HAP-1 (cell line): ENCODE measurements at regions of chr4 and their contacts with region 1.

Region 1: DNA sequence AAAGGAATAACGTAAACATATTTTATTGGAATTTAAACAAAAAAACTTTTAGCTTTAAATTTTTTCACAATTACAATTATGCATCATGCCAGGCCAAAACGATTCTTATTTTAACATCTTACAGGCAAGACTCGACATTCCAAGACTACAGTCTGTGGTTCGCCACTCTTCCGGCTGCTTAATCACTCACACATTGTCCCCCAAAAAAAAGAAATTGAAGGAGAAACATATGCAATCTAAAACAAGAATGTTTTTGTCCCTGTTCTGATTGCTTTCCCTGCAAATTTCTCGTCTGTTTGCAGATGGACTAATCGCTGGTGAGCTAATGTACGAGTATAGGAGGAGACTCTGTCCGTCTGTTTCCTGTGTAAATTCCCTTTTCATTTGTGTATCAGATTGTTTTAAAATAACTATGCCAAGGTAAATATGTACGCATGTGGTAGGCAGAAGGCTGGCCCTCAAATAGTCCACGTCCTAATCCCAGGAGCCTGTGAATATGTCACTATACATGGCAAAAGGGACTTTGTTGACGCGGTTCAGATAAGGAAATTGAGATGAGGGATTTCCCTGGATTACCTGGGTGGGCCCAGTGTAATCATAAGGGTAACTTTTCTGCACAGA is 37.7 kb upstream of the MTNR1A start:
- DNase-seq: no peak
- H3K4me3 ChIP-seq: no peak overlapping the region
- H3K4me1 ChIP-seq: no peaks in the 10 kb centered on the region
- H3K27me3 ChIP-seq: no peaks in the 10 kb centered on the region

Region 2: DNA sequence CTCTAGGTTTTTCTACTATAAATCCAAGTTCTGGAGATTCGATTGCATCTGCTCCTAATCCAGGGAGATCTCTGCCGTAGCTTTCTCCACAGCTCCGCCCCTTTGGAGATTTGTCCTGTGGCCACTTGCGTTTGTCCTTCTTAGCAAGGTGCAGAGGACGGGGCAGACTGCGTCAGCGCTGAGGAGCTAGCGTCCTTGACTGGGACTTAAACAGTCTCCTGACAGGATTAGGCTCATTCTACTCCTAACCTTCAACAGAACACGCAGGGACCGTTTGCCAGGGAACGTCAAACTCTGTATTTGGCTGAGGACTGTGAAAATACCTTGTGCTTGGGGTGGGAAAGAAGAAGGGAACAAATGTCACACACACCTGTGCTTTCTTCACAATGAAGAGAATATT is 819.7 kb before region 1 on chr4:
- in situ Hi-C with region 1: no loop called
- DNase-seq: peak in 1 of 2 experiments; percentile 28
- H3K4me3 ChIP-seq: no peak overlapping the region
- H3K4me1 ChIP-seq: peaks cover 12% of the 10 kb centered on the region
- H3K27me3 ChIP-seq: no peaks in the 10 kb centered on the region

Region 3: DNA sequence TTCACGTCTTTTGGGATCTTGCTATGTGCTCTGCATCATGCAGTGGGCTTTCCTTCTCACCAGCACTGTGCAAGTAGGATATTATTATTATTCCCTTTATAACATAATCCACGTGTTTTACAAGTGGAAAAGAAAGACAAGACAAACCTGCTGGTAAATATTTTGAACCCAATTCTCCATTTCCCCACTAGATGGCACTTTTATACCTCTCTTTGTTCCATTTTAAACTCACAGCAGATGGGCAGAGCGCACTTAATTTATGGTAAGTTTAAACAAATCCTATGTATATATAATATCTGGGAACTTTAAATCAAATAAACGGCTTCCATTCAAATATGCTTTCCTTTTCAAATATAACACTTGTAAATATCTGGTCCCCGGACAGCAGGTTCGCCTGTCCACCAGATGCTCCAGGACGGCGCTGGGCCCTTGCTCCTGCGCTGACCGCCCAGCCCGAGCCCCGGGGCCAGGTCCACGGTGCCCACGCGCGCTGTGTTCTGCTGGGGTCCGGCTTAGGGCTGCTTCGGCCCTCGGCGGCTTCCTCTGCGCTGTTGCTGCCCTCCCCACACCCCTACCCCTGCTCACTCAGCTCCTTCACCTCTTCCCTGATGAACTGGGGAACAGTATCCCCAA is 295.9 kb before region 1 on chr4:
- in situ Hi-C with region 1: loop called (anchors 10 kb)
- DNase-seq: peak; percentile 14 to 54
- H3K4me3 ChIP-seq: no peak overlapping the region
- H3K4me1 ChIP-seq: no peaks in the 10 kb centered on the region
- H3K27me3 ChIP-seq: no peaks in the 10 kb centered on the region

Region 4: GRCh38 chr4:186755550-186756519 is 162.8 kb after region 1 on chr4:
- in situ Hi-C with region 1: no loop called
- DNase-seq: no peak
- H3K4me3 ChIP-seq: no peak overlapping the region
- H3K4me1 ChIP-seq: no peaks in the 10 kb centered on the region
- H3K27me3 ChIP-seq: no peaks in the 10 kb centered on the region